Activated CD4-positive, alpha-beta memory T cell treated with anti-CD3 and anti-CD28 coated beads for 36 hours (primary cell): ENCODE measurements at regions of chr6 and their contacts with region 1.

Region 1: DNA sequence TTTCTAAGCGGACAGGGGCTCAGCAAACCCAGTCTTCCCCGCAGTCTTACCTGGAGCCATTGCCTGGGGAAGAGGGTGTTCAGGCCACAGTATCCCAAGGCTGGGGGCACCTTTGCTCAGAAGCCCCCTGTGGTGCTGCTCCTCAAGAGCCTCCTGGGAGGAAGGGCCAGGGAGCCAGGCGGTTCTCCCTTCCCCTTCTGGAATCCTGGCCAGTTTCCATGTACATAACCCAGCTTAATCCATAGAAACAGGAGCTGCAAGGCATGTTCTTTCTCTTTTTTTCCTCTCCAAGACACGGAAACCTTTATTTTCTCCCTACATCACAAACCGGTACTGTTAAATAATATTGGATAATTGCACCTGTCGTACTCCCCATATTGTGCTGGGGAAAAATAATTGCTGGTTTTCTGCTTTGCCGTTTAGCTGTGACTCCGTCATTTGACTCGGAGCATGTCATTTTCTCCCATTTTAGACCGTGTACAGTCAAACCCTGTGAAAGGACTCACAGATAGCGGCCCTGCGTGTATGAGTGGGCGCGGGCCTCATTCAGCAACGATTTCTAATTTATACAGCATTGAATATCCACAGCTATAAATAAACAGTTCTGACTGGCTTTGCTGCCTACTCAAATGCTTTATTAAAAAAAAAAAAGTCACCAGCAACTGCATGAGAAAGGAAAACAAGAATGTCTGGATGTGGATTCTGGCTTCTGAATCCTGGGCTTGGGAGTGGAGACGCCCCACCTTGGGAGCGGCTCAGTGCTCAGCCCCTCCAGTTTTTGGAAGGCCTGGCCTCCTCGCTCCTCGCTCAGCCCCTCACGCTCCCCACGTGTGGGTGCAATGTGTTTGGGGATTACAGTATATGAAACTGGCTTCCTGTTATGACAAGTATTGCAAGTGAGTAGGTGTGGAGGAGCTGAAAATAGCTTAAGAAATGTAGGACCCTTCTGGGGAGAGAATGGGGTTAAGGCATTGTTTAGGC is 67.3 kb downstream of the ADTRP start:
- DNase-seq: peak; percentile 83
- H3K4me3 Mint-ChIP-seq: peak overlapping the region; percentile 68
- H3K27ac Mint-ChIP-seq: peak overlapping the region; percentile 97
- H3K4me1 Mint-ChIP-seq: peaks cover 72% of the 10 kb centered on the region
- H3K27me3 Mint-ChIP-seq: no peaks in the 10 kb centered on the region

Region 2: DNA sequence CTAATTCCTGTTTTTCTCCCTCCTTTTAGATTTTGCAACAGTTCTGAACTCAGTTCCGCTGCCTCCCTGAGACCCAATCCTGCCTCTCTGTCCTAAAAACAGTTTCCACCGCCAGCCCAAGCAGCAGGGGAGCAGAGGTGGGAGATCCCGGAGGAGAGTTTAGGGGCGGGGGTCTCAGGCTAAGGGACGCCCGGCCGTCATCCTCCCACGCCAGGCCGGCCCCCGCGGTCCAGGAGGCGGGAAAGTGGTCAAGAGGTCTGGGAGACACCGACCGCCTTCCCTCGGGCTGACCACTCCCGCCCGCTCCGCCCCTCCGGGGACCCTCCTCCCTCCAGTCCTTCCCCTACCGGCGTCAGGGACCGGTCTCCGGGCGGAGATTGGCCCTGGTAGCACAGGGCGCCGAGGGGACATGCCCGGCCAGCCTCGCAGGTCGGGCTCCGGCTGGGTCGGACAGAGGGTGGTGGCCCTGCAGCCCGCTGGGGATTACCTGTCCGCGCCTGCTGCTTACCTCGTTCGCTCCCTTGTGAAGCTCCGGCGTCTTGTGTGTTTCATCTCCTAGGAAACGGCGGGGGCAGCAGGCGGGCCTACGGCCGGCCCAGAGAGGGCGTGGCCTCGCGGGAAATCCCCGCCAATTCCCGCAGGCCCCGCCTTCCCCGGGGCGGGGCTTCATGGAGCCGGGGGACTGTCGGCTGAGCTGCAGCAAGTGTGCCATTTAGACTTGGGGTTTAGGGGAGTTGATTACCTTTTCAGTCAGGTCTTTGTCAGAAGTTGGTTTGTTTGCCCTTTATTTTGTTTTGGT is 873.1 kb before region 1 on chr6 and contains the start of gene MAK:
- CTCF ChIA-PET with region 1: no interaction called
- POLR2A ChIA-PET with region 1: no interaction called
- intact Hi-C with region 1: loop called (anchors 2 kb)
- DNase-seq: peak; percentile 91
- H3K4me3 Mint-ChIP-seq: peak within 1 kb of the TSS; percentile 73
- H3K27ac Mint-ChIP-seq: peak within 1 kb of the TSS; percentile 98
- H3K4me1 Mint-ChIP-seq: peaks cover 31% of the 10 kb centered on the region
- H3K27me3 Mint-ChIP-seq: peaks cover 40% of the 10 kb centered on the region
- total RNA-seq, gene MAK: 0.87 to 1.1 TPM

Region 3: DNA sequence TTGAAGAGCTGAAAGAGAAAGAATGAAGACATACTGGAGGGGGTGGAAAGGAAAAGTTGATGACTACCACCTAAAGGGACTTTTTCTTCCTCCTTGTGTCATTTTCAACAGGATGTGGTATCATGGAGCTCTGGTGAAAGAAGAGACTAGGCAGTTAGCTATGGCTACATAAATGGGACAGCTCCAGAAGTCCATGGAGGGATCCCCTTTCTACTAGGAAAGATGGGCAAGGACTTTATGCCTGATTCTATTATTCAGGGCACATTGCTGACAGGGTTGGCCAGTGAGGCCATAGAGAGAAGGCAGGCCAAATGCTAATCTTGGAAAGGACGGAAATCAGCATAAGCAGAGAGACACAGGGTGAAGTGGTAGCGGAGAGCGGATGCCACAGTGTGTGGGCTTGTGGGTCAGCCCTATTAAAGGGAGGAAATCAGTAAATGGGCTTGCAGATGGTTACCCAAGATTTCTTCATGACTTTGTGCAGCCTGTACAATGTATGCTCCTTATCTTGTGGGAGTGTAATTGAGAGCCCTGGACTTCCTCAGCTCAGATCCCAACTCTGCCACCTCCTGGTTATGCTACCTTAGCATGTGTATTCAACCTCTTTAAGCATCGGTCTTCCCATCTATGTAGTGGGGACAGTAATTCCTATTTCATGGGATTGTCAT is 251.2 kb before region 1 on chr6:
- CTCF ChIA-PET with region 1: no interaction called
- POLR2A ChIA-PET with region 1: no interaction called
- intact Hi-C with region 1: loop called (anchors 5 kb)
- DNase-seq: peak; percentile 23
- H3K4me3 Mint-ChIP-seq: peak overlapping the region; percentile 57
- H3K27ac Mint-ChIP-seq: peak overlapping the region; percentile 90
- H3K4me1 Mint-ChIP-seq: peaks cover 31% of the 10 kb centered on the region
- H3K27me3 Mint-ChIP-seq: no peaks in the 10 kb centered on the region

Region 4: GRCh38 chr6:11766589-11767450 is 55.5 kb after region 1 on chr6:
- CTCF ChIA-PET with region 1: interaction called, 3 read pairs
- POLR2A ChIA-PET with region 1: interaction called, 7 read pairs
- intact Hi-C with region 1: loop called (anchors 2 kb)
- DNase-seq: no peak
- H3K4me3 Mint-ChIP-seq: no peak overlapping the region
- H3K27ac Mint-ChIP-seq: no peak overlapping the region
- H3K4me1 Mint-ChIP-seq: peaks cover 39% of the 10 kb centered on the region
- H3K27me3 Mint-ChIP-seq: peaks cover 8% of the 10 kb centered on the region

Region 5: DNA sequence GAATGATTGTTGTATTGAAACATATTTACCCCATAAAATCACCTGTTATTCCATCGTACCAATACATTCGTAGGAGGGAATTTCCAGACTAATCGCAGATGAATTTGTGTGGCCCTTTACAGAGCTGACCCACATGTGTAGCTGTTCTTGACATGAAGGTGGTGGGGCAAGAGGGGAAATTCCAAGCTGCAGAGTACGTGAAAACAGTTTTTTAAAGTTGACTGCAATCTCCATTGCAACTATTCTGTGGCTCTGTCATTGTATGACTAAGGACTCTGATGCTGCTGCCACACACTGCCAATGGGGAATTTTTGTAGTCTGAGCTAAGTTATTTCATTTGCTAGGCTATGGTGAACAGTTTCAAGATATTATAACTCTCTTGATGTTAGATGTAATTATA is 113.7 kb after region 1 on chr6:
- CTCF ChIA-PET with region 1: no interaction called
- POLR2A ChIA-PET with region 1: interaction called, 6 read pairs
- intact Hi-C with region 1: loop called (anchors 1 kb)
- DNase-seq: peak; percentile 51
- H3K4me3 Mint-ChIP-seq: no peak overlapping the region
- H3K27ac Mint-ChIP-seq: peak overlapping the region; percentile 61
- H3K4me1 Mint-ChIP-seq: peaks cover 11% of the 10 kb centered on the region
- H3K27me3 Mint-ChIP-seq: peaks cover 2% of the 10 kb centered on the region

Region 6: DNA sequence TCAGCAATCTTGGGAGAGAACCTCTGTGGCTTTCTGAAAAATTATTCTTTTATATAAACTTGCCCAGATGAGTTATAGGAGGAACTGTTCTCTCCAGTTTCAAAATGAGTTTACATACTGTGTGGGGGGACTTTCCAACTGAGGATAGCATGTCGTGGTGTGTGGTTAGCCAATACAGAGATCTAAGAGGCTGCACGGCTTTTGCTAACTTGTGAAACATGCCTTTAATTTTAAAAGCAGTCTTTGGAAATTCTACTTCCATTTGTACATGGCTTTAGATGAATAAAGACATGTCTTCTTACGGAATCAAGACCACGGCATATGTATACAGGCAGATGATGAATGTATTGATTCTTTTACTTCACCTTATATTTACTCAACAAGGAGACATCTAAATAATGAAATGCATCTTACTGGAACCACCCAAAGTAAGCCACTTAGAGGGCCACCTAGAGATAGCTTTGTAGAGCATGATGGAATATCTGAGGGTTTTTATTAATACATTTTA is 340.6 kb after region 1 on chr6:
- CTCF ChIA-PET with region 1: no interaction called
- POLR2A ChIA-PET with region 1: interaction called, 3 read pairs
- intact Hi-C with region 1: loop called (anchors 1 kb)
- DNase-seq: peak; percentile 78
- H3K4me3 Mint-ChIP-seq: peak overlapping the region; percentile 13
- H3K27ac Mint-ChIP-seq: peak overlapping the region; percentile 84
- H3K4me1 Mint-ChIP-seq: peaks cover 73% of the 10 kb centered on the region
- H3K27me3 Mint-ChIP-seq: no peaks in the 10 kb centered on the region